Panc1 (cell line): ENCODE measurements at regions of chr16 and their contacts with region 1.

Region 1: GRCh38 chr16:20971401-20971800 is 70.8 kb downstream of the LYRM1 start:
- DNase-seq: no peak
- ATAC-seq: no peak
- H3K4me3 ChIP-seq: no peak overlapping the region
- H3K27ac ChIP-seq: no peak overlapping the region
- H3K4me1 ChIP-seq: no peaks in the 10 kb centered on the region
- H3K27me3 ChIP-seq: no peaks in the 10 kb centered on the region
- CTCF ChIP-seq: no peak

Region 2: DNA sequence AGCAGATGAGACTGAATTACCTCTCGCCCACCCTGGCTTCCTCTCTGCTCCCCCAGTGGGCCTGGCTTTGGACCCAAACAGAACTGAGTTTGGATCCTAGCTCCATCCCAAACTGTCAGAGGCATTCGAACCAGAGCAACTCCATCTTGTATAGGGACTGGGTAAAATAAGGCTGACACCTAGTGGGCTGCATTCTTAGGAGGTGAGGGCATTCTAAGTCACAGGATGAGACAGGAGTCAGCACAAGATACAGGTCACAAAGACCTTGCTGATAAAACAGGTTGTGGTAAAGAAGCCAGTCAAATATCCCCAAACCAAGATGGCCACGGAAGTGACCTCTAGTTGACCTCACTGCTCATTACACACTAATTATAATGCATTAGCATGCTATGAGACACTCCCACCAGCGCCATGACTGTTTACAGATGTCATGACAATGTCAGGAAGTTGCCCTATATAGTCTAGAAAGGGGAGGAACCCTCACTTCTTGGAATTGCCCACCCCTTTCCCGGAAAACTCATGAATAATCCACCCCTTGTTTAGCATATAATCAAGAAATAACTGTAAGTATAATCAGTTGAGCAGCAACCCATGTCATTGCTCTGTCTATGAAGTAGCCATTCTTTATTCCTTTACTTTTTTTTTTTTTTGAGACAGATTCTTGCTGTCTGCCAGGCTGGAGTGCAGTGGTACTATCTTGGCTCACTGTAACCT is 26.4 kb before region 1 on chr16:
- CTCF ChIA-PET with region 1: no interaction called
- POLR2A ChIA-PET with region 1: no interaction called
- in situ Hi-C with region 1: no loop called
- intact Hi-C with region 1: no loop called
- DNase-seq: peak; percentile 10
- ATAC-seq: no peak
- H3K4me3 ChIP-seq: no peak overlapping the region
- H3K27ac ChIP-seq: no peak overlapping the region
- H3K4me1 ChIP-seq: no peaks in the 10 kb centered on the region
- H3K27me3 ChIP-seq: no peaks in the 10 kb centered on the region
- CTCF ChIP-seq: no peak

Region 3: GRCh38 chr16:21056396-21056795 is 85.0 kb after region 1 on chr16:
- CTCF ChIA-PET with region 1: no interaction called
- POLR2A ChIA-PET with region 1: interaction called, 13 read pairs
- in situ Hi-C with region 1: no loop called
- intact Hi-C with region 1: no loop called
- DNase-seq: no peak
- ATAC-seq: no peak
- H3K4me3 ChIP-seq: no peak overlapping the region
- H3K27ac ChIP-seq: no peak overlapping the region
- H3K4me1 ChIP-seq: no peaks in the 10 kb centered on the region
- H3K27me3 ChIP-seq: 0 out of 2 replicates have a peak, but pooled peaks cover 2% of the 10 kb centered on the region
- CTCF ChIP-seq: no peak